ENCODE measurements at regions of chr12 and their contacts with region 1.

Region 1: GRCh38 chr12:67441736-67442346 is 172.7 kb downstream of the CAND1 start:
- DNase-seq: peak; percentile 92
- ATAC-seq: peak; percentile 98
- H3K4me3 Mint-ChIP-seq: no peak overlapping the region
- H3K27ac Mint-ChIP-seq: no peak overlapping the region
- H3K4me1 Mint-ChIP-seq: peaks cover 24% of the 10 kb centered on the region
- H3K27me3 Mint-ChIP-seq: no peaks in the 10 kb centered on the region
- CTCF ChIP-seq: peak; percentile 75

Region 2: GRCh38 chr12:67344979-67345710 is 96.7 kb before region 1 on chr12:
- CTCF ChIA-PET with region 1: no interaction called
- POLR2A ChIA-PET with region 1: no interaction called
- intact Hi-C with region 1: no loop called
- DNase-seq: no peak
- ATAC-seq: no peak
- H3K4me3 Mint-ChIP-seq: no peak overlapping the region
- H3K27ac Mint-ChIP-seq: no peak overlapping the region
- H3K4me1 Mint-ChIP-seq: no peaks in the 10 kb centered on the region
- H3K27me3 Mint-ChIP-seq: no peaks in the 10 kb centered on the region
- CTCF ChIP-seq: no peak

Region 3: GRCh38 chr12:67355578-67356379 is 86.1 kb before region 1 on chr12:
- CTCF ChIA-PET with region 1: interaction called, 21 read pairs
- POLR2A ChIA-PET with region 1: no interaction called
- intact Hi-C with region 1: loop called (anchors 2 kb)
- DNase-seq: peak; percentile 20
- ATAC-seq: no peak
- H3K4me3 Mint-ChIP-seq: no peak overlapping the region
- H3K27ac Mint-ChIP-seq: no peak overlapping the region
- H3K4me1 Mint-ChIP-seq: peaks cover 16% of the 10 kb centered on the region
- H3K27me3 Mint-ChIP-seq: no peaks in the 10 kb centered on the region
- CTCF ChIP-seq: peak; percentile 72

Region 4: GRCh38 chr12:67498991-67499390 is 57.1 kb after region 1 on chr12:
- CTCF ChIA-PET with region 1: no interaction called
- POLR2A ChIA-PET with region 1: no interaction called
- intact Hi-C with region 1: no loop called
- DNase-seq: no peak
- ATAC-seq: no peak
- H3K4me3 Mint-ChIP-seq: no peak overlapping the region
- H3K27ac Mint-ChIP-seq: no peak overlapping the region
- H3K4me1 Mint-ChIP-seq: peaks cover 16% of the 10 kb centered on the region
- H3K27me3 Mint-ChIP-seq: no peaks in the 10 kb centered on the region
- CTCF ChIP-seq: no peak

Measured in activated CD8-positive, alpha-beta T cell treated with anti-CD3 and anti-CD28 coated beads for 36 hours (primary cell).